Heart right ventricle (tissue), 16 donors: ENCODE measurements at regions of chr14 and their contacts with region 1.

Region 1: DNA sequence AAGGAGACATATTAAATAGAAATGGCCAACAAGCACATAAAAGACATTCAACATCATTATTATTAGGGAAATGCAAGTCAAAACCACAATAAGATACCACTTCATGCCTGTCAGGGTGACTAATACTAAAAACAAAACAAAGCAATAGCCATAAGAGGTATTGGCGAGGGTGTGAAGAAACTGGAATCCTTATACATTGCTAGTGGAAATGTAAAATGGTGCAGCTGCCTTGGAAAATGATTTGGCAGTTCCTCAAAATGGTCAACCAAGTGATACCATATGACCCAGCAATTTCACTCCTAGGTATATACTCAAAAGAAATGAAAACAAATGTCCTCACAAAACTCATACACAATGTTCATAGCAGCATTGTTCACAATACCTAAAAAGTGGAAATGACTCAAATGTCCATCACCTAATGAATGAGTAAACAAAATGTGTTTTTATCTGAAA is 27.0 kb downstream of the GPR135 start:
- DNase-seq: no peak
- ATAC-seq: no peak
- H3K4me3 ChIP-seq: no peak overlapping the region
- H3K27ac ChIP-seq: peak overlapping the region in 6 of 10 donors; percentile 20 to 54 (median 32)
- H3K4me1 ChIP-seq: peaks cover 0 to 30% (median 18%) of the 10 kb centered on the region in 9 donors
- H3K27me3 ChIP-seq: no peaks in the 10 kb centered on the region
- CTCF ChIP-seq: no peak

Region 2: DNA sequence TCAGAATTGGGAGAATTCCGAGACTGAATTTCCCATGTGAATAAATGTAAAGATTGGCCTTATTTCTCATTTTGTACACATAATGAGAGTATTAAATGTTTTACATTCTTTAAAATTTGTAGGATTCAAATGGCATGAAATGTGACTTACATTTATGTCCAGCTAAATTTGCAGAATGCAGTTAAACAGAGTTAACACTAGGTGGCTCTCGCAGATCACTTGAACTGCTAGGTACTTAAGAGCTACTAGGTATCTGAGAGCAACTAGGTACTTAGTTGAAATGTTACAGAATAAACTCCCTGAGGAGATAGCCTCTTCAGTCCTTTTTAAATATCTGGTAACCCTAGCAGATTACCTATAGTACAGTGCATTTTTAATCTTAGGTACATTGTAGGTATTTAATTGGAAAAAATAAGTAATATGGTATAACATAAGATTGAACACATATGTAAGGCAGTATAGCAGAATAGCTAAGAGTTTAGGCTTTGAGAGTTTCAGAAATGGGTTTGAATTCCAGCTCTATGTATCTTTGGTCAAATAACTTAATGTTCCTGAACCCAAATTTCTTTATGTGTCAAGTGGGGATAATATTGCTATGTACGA is 936.9 kb before region 1 on chr14:
- intact Hi-C with region 1: loop called in 2 of 10 experiments (anchors 10 kb)
- DNase-seq: peak in 1 of 2 donors; percentile 22
- ATAC-seq: peak in 3 of 8 donors; percentile 44 to 62 (median 50)
- H3K4me3 ChIP-seq: no peak overlapping the region
- H3K27ac ChIP-seq: no peak overlapping the region
- H3K4me1 ChIP-seq: no peaks in the 10 kb centered on the region
- H3K27me3 ChIP-seq: no peaks in the 10 kb centered on the region
- CTCF ChIP-seq: peak; percentile 57 to 87 (median 82)

Region 3: DNA sequence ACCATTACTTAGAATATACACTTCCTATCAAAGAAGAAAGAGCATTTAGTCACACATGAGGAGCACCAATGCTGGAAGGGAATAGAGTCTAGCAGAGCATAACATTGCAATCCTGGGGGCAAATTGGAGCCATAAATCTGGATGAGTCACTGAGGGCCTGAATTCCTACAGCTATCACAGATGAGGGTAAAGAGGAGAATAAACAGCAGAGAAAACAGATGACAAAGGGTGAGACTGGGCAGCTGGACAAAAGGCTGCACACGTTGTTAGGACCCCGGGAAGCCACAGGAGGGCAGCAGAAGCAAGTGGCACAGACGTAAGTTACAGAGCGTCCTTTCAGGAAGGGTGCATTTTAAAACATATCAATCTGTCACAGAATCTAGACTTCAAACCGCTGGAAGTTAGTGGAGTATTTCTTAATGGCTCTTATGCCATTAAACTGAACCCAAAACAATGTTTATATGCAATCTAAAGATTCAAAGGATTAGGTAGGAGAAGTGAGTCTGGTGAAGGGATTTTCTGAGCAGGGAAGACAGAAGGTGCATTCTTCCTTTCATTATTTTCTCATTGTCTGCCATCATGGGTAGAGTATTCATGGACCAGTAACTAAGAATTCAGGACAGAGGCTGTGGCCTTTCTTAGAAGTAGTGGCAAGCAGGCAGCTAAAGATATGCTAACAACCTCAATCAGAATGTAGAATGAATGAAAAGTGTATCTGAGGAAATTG is 409.6 kb before region 1 on chr14:
- intact Hi-C with region 1: loop called in 2 of 10 experiments (anchors 5 to 10 kb)
- DNase-seq: peak; percentile 25 to 41
- ATAC-seq: peak in 7 of 8 donors; percentile 58 to 81 (median 74)
- H3K4me3 ChIP-seq: no peak overlapping the region
- H3K27ac ChIP-seq: no peak overlapping the region
- H3K4me1 ChIP-seq: peaks cover 0 to 9% (median 0%) of the 10 kb centered on the region in 9 donors
- H3K27me3 ChIP-seq: no peaks in the 10 kb centered on the region
- CTCF ChIP-seq: peak; percentile 41 to 83 (median 77)

Region 4: GRCh38 chr14:59126710-59127432 is 311.4 kb before region 1 on chr14:
- intact Hi-C with region 1: loop called in 2 of 10 experiments (anchors 2 to 5 kb)
- DNase-seq: peak in 1 of 2 donors; percentile 32
- ATAC-seq: peak in 7 of 8 donors; percentile 79 to 91 (median 89)
- H3K4me3 ChIP-seq: no peak overlapping the region
- H3K27ac ChIP-seq: no peak overlapping the region
- H3K4me1 ChIP-seq: peaks cover 0 to 9% (median 0%) of the 10 kb centered on the region in 9 donors
- H3K27me3 ChIP-seq: no peaks in the 10 kb centered on the region
- CTCF ChIP-seq: peak; percentile 60 to 88 (median 81)

Region 5: DNA sequence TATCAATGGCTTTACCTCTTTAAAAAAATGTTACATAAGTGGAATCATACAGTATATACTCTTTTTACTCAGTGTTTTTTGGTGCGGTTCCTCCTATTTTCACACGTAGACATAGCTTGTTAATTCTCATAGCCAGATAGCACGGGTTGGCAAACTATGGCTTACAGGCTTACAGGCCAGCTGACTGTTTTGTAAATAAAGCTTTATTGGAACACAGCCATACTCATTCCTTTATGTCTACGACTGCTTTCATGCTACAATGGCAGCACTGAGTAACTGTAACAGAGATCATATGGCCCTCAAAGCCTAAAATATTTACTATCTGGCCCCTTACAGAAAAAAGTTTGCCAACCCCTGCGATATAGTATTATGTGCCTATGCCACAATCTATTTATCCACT is 255.6 kb before region 1 on chr14:
- intact Hi-C with region 1: loop called in 7 of 10 experiments (anchors 5 to 10 kb)
- DNase-seq: no peak
- ATAC-seq: no peak
- H3K4me3 ChIP-seq: no peak overlapping the region
- H3K27ac ChIP-seq: no peak overlapping the region
- H3K4me1 ChIP-seq: peaks cover 0 to 6% (median 0%) of the 10 kb centered on the region in 9 donors
- H3K27me3 ChIP-seq: peaks cover 0 to 7% (median 0%) of the 10 kb centered on the region in 7 donors
- CTCF ChIP-seq: no peak

Region 6: GRCh38 chr14:59360923-59361794 is 77.1 kb before region 1 on chr14:
- intact Hi-C with region 1: no loop called
- DNase-seq: peak; percentile 74 to 81
- ATAC-seq: peak; percentile 41 to 80 (median 72)
- H3K4me3 ChIP-seq: peak overlapping the region in 5 of 10 donors; percentile 0 to 38 (median 14)
- H3K27ac ChIP-seq: peak overlapping the region; percentile 21 to 91 (median 86)
- H3K4me1 ChIP-seq: peaks cover 13 to 87% (median 71%) of the 10 kb centered on the region in 9 donors
- H3K27me3 ChIP-seq: no peaks in the 10 kb centered on the region
- CTCF ChIP-seq: peak in 3 of 9 donors; percentile 27 to 31 (median 28)

Region 7: DNA sequence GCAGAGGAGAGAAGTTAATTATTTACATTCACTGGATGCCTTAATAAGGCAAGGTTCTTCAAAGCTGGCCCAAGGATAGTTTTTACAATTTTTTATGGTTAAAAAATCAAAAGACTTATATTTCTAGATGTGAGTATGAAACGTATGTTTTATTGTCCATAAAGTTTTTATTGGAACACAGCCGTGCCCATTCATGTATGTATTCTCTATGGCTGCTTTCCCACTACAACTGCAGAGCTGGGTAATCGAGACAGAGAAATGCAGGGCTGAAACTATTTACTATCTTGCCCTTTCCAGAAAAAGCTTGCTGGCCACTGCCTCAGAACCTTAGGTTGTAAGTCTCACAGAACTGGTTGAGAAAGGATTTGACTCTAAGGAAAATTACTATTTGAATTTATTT is 62.5 kb after region 1 on chr14:
- intact Hi-C with region 1: no loop called
- DNase-seq: no peak
- ATAC-seq: no peak
- H3K4me3 ChIP-seq: no peak overlapping the region
- H3K27ac ChIP-seq: no peak overlapping the region
- H3K4me1 ChIP-seq: peaks cover 0 to 8% (median 3%) of the 10 kb centered on the region in 9 donors
- H3K27me3 ChIP-seq: no peaks in the 10 kb centered on the region
- CTCF ChIP-seq: no peak